ENCODE measurements at regions of chr10 and their contacts with region 1.

Region 1: GRCh38 chr10:689433-690371 is at the start of gene DIP2C:
- DNase-seq: peak in 2 of 3 donors; percentile 62 to 79
- ATAC-seq: peak; percentile 80
- H3K4me3 ChIP-seq: peak within 1 kb of the TSS; percentile 50
- H3K4me1 ChIP-seq: no peaks in the 10 kb centered on the region
- CTCF ChIP-seq: no peak
- total RNA-seq, gene DIP2C: 8.0 to 72.0 (median 8.5) TPM

Region 2: GRCh38 chr10:511101-511848 is 178.4 kb before region 1 on chr10:
- intact Hi-C with region 1: loop called in 1 of 2 experiments (anchors 10 kb)
- DNase-seq: peak; percentile 91 to 97 (median 93)
- ATAC-seq: peak; percentile 95
- H3K4me3 ChIP-seq: no peak overlapping the region
- H3K4me1 ChIP-seq: no peaks in the 10 kb centered on the region
- CTCF ChIP-seq: peak; percentile 95

Region 3: GRCh38 chr10:804191-804781 is 114.6 kb after region 1 on chr10:
- intact Hi-C with region 1: no loop called
- DNase-seq: peak in 1 of 3 donors; percentile 49
- ATAC-seq: peak; percentile 3
- H3K4me3 ChIP-seq: no peak overlapping the region
- H3K4me1 ChIP-seq: peaks cover 2% of the 10 kb centered on the region
- CTCF ChIP-seq: no peak

Region 4: DNA sequence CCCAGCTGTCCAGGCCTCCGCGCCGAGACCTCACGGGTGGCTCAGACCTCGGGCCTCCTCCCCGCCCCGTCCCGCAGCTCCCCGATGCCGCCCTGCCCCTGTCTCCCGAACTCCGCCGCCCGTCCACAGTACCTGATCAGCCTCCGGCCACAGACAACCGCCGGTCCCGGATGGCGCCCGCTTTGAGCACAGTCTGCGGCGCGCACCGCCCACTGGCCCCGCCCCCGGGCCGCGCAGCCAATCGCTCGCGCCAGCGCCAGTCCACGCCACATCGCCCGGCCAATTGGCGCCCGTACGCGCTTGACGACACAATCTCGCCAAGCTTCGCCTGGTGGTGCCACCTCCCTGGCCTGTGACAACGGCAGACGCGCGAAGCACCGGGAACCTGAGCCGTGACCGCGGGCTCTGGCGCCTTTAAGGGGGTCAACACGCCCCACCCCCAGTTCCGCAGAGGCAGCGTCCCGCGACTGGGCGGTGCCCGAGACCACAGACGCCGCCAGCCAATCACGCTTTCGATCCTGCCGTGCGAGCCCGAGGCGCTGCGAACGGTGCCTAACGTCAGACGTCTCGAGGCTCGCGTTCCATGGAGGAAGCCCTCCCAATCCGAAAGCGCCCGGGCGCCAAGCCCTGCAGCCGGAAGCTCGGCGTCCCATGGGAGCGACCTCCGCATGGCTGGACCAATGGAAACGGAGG is 359.2 kb after region 1 on chr10 and contains the start of gene IDI1:
- intact Hi-C with region 1: no loop called
- DNase-seq: peak; percentile 96 to 99 (median 98)
- ATAC-seq: peak; percentile 91
- H3K4me3 ChIP-seq: peak within 1 kb of the TSS; percentile 56
- H3K4me1 ChIP-seq: peaks cover 19% of the 10 kb centered on the region
- CTCF ChIP-seq: no peak
- total RNA-seq, gene IDI1: 37.7 to 71.2 (median 65.8) TPM